ENCODE measurements at regions of chrX and their contacts with region 1.

Region 1: GRCh38 chrX:71181910-71182799 is 37.5 kb downstream of the NLGN3 start:
- DNase-seq: peak; percentile 89
- H3K4me3 Mint-ChIP-seq: peak overlapping the region; percentile 86
- H3K27ac Mint-ChIP-seq: peak overlapping the region; percentile 99
- H3K4me1 Mint-ChIP-seq: peaks cover 12% of the 10 kb centered on the region
- H3K27me3 Mint-ChIP-seq: no peaks in the 10 kb centered on the region

Region 2: DNA sequence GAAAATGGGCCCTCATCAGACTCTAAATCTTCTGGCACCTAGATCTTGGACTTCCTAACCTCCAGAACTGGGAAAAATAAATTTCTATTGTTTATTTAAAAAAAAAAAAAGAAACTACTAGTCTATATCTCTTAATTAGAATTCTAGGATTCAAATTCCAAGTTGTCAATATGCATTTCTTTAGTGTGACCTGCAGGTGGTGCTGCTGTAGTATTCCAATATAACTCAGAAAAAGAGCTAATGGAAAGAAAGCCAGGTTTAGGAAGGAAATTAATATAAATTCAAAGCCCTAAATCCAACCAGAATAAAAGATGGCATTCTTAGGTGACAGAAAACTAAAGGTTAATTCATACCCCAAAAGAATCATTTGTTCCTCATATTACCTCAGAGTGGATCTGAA is 1758.0 kb before region 1 on chrX:
- CTCF ChIA-PET with region 1: no interaction called
- POLR2A ChIA-PET with region 1: no interaction called
- intact Hi-C with region 1: no loop called
- DNase-seq: no peak
- H3K4me3 Mint-ChIP-seq: no peak overlapping the region
- H3K27ac Mint-ChIP-seq: no peak overlapping the region
- H3K4me1 Mint-ChIP-seq: no peaks in the 10 kb centered on the region
- H3K27me3 Mint-ChIP-seq: peaks cover 3% of the 10 kb centered on the region

Region 3: GRCh38 chrX:70755850-70756249 is 426.3 kb before region 1 on chrX:
- CTCF ChIA-PET with region 1: no interaction called
- POLR2A ChIA-PET with region 1: no interaction called
- intact Hi-C with region 1: loop called (anchors 10 kb)
- DNase-seq: peak; percentile 83
- H3K4me3 Mint-ChIP-seq: peak overlapping the region; percentile 20
- H3K27ac Mint-ChIP-seq: no peak overlapping the region
- H3K4me1 Mint-ChIP-seq: peaks cover 22% of the 10 kb centered on the region
- H3K27me3 Mint-ChIP-seq: no peaks in the 10 kb centered on the region

Region 4: DNA sequence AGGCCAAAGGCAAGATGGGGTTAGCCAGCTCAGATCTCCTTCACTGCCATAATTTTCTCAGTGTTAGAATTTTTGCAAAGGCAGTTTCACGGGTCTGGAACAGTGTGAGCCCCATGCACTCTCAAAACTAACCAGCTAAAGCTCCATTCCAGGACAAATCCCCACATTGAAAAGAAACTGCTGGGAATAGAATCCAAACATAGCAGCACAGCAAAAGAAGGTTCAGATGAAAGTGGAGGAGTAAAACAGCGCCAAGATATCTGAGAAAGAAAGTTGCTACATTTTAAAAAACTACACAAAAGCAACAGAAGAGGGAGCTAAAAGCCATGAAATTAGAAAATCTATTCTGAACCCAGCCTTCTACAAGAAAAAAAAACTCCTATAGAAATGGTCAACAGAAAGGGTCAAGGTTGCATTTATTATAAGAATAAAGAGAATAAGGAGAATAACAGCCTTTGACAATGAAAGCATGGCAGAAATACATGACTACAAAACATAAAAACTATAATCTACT is 211.6 kb before region 1 on chrX:
- CTCF ChIA-PET with region 1: interaction called, 8 read pairs
- POLR2A ChIA-PET with region 1: no interaction called
- intact Hi-C with region 1: loop called (anchors 2 kb)
- DNase-seq: no peak
- H3K4me3 Mint-ChIP-seq: no peak overlapping the region
- H3K27ac Mint-ChIP-seq: no peak overlapping the region
- H3K4me1 Mint-ChIP-seq: peaks cover 6% of the 10 kb centered on the region
- H3K27me3 Mint-ChIP-seq: no peaks in the 10 kb centered on the region

Region 5: DNA sequence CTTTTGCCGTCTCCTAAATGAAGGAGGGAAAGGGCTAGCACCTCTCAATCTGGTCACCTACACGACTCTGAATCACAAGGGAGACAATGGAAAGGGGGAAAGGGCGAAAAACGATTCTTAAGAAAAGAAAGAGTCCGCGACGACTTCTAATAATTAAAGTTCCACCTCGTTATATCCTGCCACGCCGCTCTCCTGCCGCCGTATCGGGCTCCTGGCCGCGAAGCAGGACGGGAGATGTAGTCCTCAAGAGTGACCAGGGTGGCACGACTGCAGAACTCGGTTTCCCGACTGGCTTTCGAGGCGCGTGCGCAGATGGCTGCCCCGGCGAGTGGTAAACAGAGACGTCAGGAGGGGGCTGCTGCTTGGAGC is 86.6 kb before region 1 on chrX and contains the start of gene FOXO4:
- CTCF ChIA-PET with region 1: interaction called, 6 read pairs
- POLR2A ChIA-PET with region 1: no interaction called
- intact Hi-C with region 1: loop called (anchors 2 kb)
- DNase-seq: peak; percentile 92
- H3K4me3 Mint-ChIP-seq: peak within 1 kb of the TSS; percentile 84
- H3K27ac Mint-ChIP-seq: peak within 1 kb of the TSS; percentile 85
- H3K4me1 Mint-ChIP-seq: peaks cover 23% of the 10 kb centered on the region
- H3K27me3 Mint-ChIP-seq: no peaks in the 10 kb centered on the region
- total RNA-seq, gene FOXO4: 8.7 to 10.7 TPM

Region 6: DNA sequence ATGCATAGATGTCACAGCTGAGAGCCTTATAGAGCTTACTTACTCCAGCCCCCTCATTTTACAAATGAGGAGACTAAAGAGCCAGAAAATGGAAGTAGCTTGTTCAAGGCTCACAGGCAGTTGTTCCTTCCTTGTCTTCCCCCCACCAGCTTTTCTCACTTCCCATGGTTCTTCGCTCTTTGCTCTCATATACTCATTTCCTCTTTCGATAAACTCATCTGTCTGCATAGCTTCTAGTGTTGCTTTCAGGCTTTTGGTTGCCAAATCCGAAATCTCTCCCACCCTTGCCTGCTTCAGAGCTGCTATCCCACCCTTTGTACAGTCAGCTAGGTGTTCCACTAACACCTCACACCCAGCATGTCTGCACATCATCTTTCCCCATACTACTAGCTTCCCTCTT is 15.9 kb after region 1 on chrX:
- CTCF ChIA-PET with region 1: interaction called, 6 read pairs
- POLR2A ChIA-PET with region 1: interaction called, 7 read pairs
- intact Hi-C with region 1: loop called (anchors 1 kb)
- DNase-seq: peak; percentile 27
- H3K4me3 Mint-ChIP-seq: peak overlapping the region; percentile 92
- H3K27ac Mint-ChIP-seq: peak overlapping the region; percentile 93
- H3K4me1 Mint-ChIP-seq: peaks cover 3% of the 10 kb centered on the region
- H3K27me3 Mint-ChIP-seq: no peaks in the 10 kb centered on the region

Region 7: GRCh38 chrX:71283403-71284143 is 101.4 kb after region 1 on chrX and contains the start of gene NONO:
- CTCF ChIA-PET with region 1: interaction called, 5 read pairs
- POLR2A ChIA-PET with region 1: interaction called, 4 read pairs
- intact Hi-C with region 1: loop called (anchors 1 kb)
- DNase-seq: peak; percentile 85
- H3K4me3 Mint-ChIP-seq: peak within 1 kb of the TSS; percentile 98
- H3K27ac Mint-ChIP-seq: peak within 1 kb of the TSS; percentile 100
- H3K4me1 Mint-ChIP-seq: peaks cover 10% of the 10 kb centered on the region
- H3K27me3 Mint-ChIP-seq: no peaks in the 10 kb centered on the region
- total RNA-seq, gene NONO: 450 to 460 TPM